ENCODE measurements at regions of chr20 and their contacts with region 1.

Region 1: DNA sequence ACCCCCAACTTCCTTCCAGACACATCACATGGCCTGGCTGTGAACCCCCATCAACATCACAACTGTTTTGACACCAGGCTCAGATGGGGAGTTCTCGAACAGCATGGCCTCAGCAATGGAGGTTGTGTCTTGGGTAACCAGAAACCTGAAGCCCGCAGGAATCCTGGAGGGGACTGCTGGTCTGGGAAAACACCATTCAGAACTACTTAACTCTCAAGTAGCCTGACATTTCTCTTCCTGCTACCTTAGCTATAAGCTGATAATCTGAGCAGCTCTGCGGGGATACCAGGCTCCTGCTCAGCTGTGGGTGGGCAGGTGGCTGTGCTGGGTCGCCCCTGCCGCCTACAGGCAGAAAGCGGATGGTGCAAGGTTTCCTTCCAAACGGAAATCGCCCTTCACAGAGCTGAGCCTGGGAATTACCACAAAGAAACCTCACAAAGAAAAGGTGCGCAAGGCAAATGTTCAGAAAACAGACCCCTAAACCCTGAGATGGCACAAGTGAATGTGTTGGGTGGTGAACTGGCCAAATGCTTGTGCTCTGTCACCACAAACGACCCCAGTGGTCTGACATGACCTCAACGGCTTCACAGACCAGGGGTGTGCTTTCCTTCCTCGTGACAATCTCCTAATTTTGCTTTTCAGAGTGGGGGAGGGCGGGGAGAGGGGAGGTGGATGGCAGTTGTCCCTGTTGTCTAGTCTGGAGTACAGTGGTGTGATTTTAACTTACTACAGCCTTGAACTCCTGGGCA is 29.5 kb downstream of the SNX5 start:
- DNase-seq: peak; percentile 74
- ATAC-seq: peak; percentile 82
- H3K4me3 Mint-ChIP-seq: no peak overlapping the region
- H3K27ac Mint-ChIP-seq: peak overlapping the region; percentile 66
- H3K4me1 Mint-ChIP-seq: peaks cover 28% of the 10 kb centered on the region
- H3K27me3 Mint-ChIP-seq: no peaks in the 10 kb centered on the region

Region 2: DNA sequence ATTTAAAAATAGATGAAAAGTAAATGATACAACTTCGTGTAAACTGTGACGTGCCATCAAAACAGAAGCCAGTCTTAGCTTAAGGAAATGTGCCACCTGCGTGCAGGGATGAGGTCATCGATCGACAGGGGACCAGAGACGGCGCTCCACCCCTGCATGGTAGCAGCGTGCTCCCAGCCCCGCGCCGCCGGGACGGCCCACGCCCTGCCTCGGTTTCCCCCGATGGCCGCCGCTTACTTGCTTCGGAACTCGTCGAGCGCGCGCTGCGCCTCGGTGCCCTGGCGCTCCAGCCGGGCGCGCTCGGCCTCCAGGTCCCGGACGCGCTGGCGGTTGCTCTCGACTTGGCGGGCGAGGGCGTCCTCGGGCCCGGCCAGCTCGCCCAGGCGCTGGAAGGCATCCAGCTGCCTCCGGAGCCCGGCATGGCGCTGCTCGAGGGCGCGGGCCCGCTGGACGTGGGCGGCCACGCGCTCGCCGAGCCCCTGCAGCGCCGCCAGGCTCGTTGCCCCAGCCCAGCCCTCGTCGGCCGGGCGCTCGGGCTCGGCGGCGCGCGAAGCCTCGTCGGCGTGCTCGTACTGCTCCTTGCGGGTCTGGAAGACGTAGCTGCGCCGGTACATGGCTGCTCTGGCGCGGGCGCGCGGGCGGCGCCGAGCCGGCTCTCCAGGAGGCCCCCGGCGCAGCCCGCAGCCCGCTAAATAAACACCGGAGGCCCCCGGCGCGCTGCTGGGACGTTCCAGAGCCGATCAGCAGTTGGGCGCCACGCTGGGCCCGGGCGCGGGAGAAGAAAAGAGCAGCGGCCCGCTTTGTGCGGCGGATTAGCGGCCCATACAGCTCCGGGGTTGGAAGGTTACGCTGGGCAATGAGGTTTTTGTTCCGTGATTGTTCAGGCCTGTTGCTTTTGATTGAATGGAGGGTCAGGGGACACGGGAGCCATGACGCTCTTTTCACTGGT is 408.1 kb before region 1 on chr20 and contains the start of gene BFSP1:
- CTCF ChIA-PET with region 1: interaction called, 12 read pairs
- POLR2A ChIA-PET with region 1: no interaction called
- DNase-seq: peak; percentile 61
- ATAC-seq: peak; percentile 83
- H3K4me3 Mint-ChIP-seq: peak within 1 kb of the TSS; percentile 86
- H3K27ac Mint-ChIP-seq: peak within 1 kb of the TSS; percentile 86
- H3K4me1 Mint-ChIP-seq: peaks cover 27% of the 10 kb centered on the region
- H3K27me3 Mint-ChIP-seq: peaks cover 36% of the 10 kb centered on the region
- total RNA-seq, gene BFSP1: 0.50 to 0.55 TPM

Region 3: GRCh38 chr20:17958373-17959256 is 19.6 kb after region 1 on chr20:
- CTCF ChIA-PET with region 1: interaction called, 13 read pairs
- POLR2A ChIA-PET with region 1: interaction called, 4 read pairs
- DNase-seq: no peak
- ATAC-seq: no peak
- H3K4me3 Mint-ChIP-seq: no peak overlapping the region
- H3K27ac Mint-ChIP-seq: peak overlapping the region; percentile 72
- H3K4me1 Mint-ChIP-seq: peaks cover 86% of the 10 kb centered on the region
- H3K27me3 Mint-ChIP-seq: no peaks in the 10 kb centered on the region

Region 4: DNA sequence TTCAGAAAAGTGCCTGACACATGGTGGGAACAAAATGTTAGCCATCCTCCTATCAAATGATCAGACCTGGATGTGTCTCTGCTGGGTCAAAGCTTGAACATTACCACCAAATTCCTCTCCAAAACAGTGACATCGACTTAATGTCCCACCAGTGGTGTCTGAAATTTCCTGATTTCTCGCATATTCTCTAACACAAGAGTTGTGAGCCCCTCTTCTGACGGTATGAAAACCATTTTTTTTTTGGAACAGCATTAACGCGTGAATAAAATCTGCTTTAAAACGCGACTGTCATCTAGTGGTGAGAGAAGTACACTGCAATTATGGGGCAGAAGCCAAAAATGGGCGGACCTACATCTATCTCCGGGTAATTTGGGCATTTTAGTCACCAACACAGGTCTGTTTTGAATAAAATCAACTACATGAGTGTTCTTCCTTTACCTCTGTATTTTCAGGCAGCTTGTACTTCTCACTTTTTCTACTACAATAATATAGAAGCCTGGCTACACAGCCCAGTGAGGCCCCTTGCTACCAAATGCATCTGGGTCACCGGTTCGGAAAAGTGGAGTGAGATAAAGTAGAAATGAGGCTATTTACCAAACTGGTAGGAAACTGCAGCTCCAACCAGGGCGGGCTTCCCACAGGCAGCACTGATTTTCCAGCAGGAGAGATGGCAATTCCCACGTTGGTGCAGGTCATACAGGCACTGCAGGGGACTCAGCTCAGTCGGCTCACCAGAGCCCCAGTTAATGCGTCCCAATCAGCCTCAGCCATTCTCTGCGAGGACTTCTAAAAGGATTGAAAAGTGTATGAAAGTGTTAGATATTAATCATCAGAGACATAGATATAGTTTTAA is 57.1 kb after region 1 on chr20:
- CTCF ChIA-PET with region 1: interaction called, 22 read pairs
- POLR2A ChIA-PET with region 1: no interaction called
- DNase-seq: peak; percentile 63
- ATAC-seq: peak; percentile 49
- H3K4me3 Mint-ChIP-seq: no peak overlapping the region
- H3K27ac Mint-ChIP-seq: peak overlapping the region; percentile 57
- H3K4me1 Mint-ChIP-seq: peaks cover 40% of the 10 kb centered on the region
- H3K27me3 Mint-ChIP-seq: peaks cover 2% of the 10 kb centered on the region

Measured in activated CD8-positive, alpha-beta T cell treated with anti-CD3 and anti-CD28 coated beads, Interleukin-2, amount 10 ng/mL, durations not matched to agents 7 days and 5 days (primary cell).